Naive thymus-derived CD4-positive, alpha-beta T cell (primary cell): ENCODE measurements at regions of chrX and their contacts with region 1.

Region 1: DNA sequence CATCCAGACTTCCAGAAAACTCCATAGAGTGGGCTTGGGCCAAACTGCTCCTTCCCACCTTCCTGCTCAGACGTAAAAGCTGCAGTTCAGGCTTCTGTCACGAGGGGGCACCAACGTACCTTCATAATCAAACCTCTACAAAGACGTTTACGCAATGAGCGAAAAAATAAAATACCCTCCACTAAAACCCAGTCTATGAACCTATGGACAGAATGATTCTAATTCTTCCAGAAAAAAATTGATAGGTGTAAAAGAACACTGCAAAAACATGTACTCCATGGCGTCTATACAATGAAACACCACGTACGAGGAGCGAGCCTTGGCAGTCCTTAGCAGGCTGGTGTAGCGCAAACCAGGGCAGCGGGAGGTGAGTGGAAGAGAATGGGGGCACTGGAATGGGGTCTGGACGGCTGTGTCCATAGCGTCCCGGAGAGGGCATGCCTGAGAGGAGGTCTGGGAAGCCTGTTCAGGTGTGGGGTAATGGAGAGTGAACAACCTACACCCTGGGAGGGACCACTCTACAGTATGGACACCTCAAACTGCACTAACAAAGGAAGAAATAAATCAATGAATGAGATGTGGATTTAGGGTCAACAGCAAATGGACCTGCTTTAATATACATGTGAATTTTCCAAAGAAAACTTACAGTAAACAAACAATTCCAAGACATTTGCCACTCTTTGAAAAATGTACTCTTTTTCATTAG is 14.4 kb upstream of the RAB40A start:
- DNase-seq: peak; percentile 29 to 70 (median 53)
- ATAC-seq: peak; percentile 72
- H3K4me3 ChIP-seq: peak overlapping the region; percentile 46
- H3K4me3 Mint-ChIP-seq: peak overlapping the region; percentile 62 to 84 (median 74)
- H3K27ac ChIP-seq: no peak overlapping the region
- H3K27ac Mint-ChIP-seq: peak overlapping the region in 2 of 9 donors; percentile 38 to 73
- H3K4me1 ChIP-seq: no peaks in the 10 kb centered on the region
- H3K4me1 Mint-ChIP-seq: peaks cover 0 to 5% (median 3%) of the 10 kb centered on the region in 7 donors
- H3K27me3 ChIP-seq: no peaks in the 10 kb centered on the region
- H3K27me3 Mint-ChIP-seq: peaks cover 0 to 5% (median 0%) of the 10 kb centered on the region in 5 donors

Region 2: DNA sequence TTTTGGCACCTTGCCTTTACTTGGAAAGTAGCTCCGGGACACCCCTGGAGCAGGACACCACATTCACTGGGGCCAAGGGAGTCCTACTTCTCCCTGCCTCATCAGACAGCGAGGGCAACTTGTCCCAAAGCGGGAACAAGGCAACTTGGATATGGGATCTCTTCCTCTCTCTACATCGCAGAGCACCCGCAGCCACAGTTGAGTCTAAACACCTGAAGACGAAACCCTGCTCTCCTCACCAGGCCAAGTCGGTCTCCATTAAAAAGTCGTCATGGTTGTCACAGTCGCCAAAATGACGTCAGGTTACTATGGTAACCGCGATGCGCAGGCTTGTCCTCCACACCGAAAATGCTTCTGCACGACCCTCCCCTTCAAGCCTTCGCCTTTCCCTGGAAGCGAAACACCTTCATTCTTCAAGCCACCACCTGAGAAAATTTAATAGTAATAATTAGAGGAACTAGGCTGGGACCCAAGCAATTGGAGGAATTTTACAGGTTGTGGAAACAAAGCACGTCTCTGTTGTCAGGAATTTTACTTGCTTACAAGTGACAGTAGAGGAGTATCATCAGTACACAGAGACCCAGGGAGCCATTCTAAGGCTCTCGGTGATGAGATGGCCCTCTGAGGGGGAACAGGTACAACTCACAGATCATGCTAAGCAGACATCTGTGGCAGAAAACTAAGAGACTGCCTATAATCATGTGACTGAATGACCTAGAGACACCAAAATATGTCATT is 21.2 kb after region 1 on chrX:
- CTCF ChIA-PET with region 1: no interaction called
- POLR2A ChIA-PET with region 1: no interaction called
- intact Hi-C with region 1: no loop called
- DNase-seq: peak; percentile 23 to 75 (median 62)
- ATAC-seq: peak; percentile 79
- H3K4me3 ChIP-seq: peak overlapping the region; percentile 73
- H3K4me3 Mint-ChIP-seq: peak overlapping the region; percentile 85 to 92 (median 90)
- H3K27ac ChIP-seq: peak overlapping the region; percentile 53
- H3K27ac Mint-ChIP-seq: peak overlapping the region; percentile 79 to 97 (median 92)
- H3K4me1 ChIP-seq: no peaks in the 10 kb centered on the region
- H3K4me1 Mint-ChIP-seq: peaks cover 0 to 11% (median 6%) of the 10 kb centered on the region in 7 donors
- H3K27me3 ChIP-seq: no peaks in the 10 kb centered on the region
- H3K27me3 Mint-ChIP-seq: peaks cover 0 to 6% (median 0%) of the 10 kb centered on the region in 5 donors

Region 3: GRCh38 chrX:103629318-103630170 is 95.9 kb after region 1 on chrX:
- CTCF ChIA-PET with region 1: no interaction called
- POLR2A ChIA-PET with region 1: no interaction called
- intact Hi-C with region 1: loop called in 1 of 2 experiments (anchors 10 kb)
- DNase-seq: peak in 7 of 9 donors; percentile 3 to 25 (median 11)
- ATAC-seq: peak; percentile 60
- H3K4me3 ChIP-seq: peak overlapping the region; percentile 71
- H3K4me3 Mint-ChIP-seq: peak overlapping the region; percentile 80 to 93 (median 89)
- H3K27ac ChIP-seq: peak overlapping the region; percentile 75
- H3K27ac Mint-ChIP-seq: peak overlapping the region; percentile 17 to 91 (median 81)
- H3K4me1 ChIP-seq: no peaks in the 10 kb centered on the region
- H3K4me1 Mint-ChIP-seq: peaks cover 7 to 19% (median 14%) of the 10 kb centered on the region in 7 donors
- H3K27me3 ChIP-seq: no peaks in the 10 kb centered on the region
- H3K27me3 Mint-ChIP-seq: no peaks in the 10 kb centered on the region

Region 4: GRCh38 chrX:103640401-103641155 is 106.9 kb after region 1 on chrX:
- CTCF ChIA-PET with region 1: no interaction called
- POLR2A ChIA-PET with region 1: no interaction called
- intact Hi-C with region 1: no loop called
- DNase-seq: no peak
- ATAC-seq: no peak
- H3K4me3 ChIP-seq: no peak overlapping the region
- H3K4me3 Mint-ChIP-seq: no peak overlapping the region
- H3K27ac ChIP-seq: no peak overlapping the region
- H3K27ac Mint-ChIP-seq: no peak overlapping the region
- H3K4me1 ChIP-seq: no peaks in the 10 kb centered on the region
- H3K4me1 Mint-ChIP-seq: no peaks in the 10 kb centered on the region
- H3K27me3 ChIP-seq: no peaks in the 10 kb centered on the region
- H3K27me3 Mint-ChIP-seq: peaks cover 0 to 7% (median 0%) of the 10 kb centered on the region in 5 donors

Region 5: DNA sequence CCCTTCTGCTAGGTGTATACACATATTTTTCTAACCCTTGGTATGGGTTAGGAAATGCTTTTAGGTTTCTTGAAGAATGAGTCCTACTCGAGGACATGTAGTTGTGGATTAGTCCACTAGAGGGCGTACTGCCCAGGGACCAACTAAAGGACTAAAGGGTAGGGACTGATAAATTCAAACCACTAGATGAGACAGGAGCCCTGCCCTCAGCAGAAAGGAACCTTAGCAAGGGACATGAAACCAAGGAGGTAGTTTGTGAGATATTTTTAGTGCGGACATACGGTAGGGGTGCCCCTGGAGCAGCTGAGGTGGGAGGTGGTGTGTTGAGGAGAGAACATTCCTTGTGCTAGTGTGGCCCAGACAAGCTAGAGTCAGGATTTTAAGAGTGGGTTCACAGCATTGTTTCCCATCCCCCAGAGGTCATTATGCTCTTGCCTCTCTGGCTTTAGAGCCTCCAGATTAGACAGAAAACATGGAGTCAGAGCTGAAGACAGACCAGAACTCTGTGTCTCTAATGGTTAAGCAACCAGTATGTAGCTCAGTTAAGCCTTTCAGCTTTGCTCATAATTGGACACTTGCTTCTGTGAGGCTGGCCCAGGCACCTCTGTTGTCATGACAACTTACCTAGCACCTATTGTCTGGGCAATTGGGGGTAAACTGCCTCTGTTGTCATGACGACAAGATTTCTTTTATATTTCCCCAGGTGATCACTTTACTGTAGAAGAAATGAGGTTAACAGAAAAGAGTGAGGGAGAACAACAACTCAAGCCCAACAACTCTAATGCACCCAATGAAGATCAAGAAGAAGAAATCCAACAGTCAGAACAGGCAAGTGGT is 178.1 kb after region 1 on chrX:
- CTCF ChIA-PET with region 1: no interaction called
- POLR2A ChIA-PET with region 1: no interaction called
- intact Hi-C with region 1: loop called (anchors 1 kb)
- DNase-seq: peak in 7 of 9 donors; percentile 15 to 46 (median 40)
- ATAC-seq: peak; percentile 76
- H3K4me3 ChIP-seq: no peak overlapping the region
- H3K4me3 Mint-ChIP-seq: no peak overlapping the region
- H3K27ac ChIP-seq: no peak overlapping the region
- H3K27ac Mint-ChIP-seq: no peak overlapping the region
- H3K4me1 ChIP-seq: no peaks in the 10 kb centered on the region
- H3K4me1 Mint-ChIP-seq: peaks cover 0 to 3% (median 0%) of the 10 kb centered on the region in 7 donors
- H3K27me3 ChIP-seq: no peaks in the 10 kb centered on the region
- H3K27me3 Mint-ChIP-seq: peaks cover 0 to 3% (median 0%) of the 10 kb centered on the region in 5 donors

Region 6: GRCh38 chrX:103774070-103774642 is 240.5 kb after region 1 on chrX:
- CTCF ChIA-PET with region 1: no interaction called
- POLR2A ChIA-PET with region 1: no interaction called
- intact Hi-C with region 1: loop called in 1 of 2 experiments (anchors 1 kb)
- DNase-seq: no peak
- ATAC-seq: no peak
- H3K4me3 ChIP-seq: no peak overlapping the region
- H3K4me3 Mint-ChIP-seq: no peak overlapping the region
- H3K27ac ChIP-seq: no peak overlapping the region
- H3K27ac Mint-ChIP-seq: no peak overlapping the region
- H3K4me1 ChIP-seq: no peaks in the 10 kb centered on the region
- H3K4me1 Mint-ChIP-seq: no peaks in the 10 kb centered on the region
- H3K27me3 ChIP-seq: no peaks in the 10 kb centered on the region
- H3K27me3 Mint-ChIP-seq: peaks cover 0 to 4% (median 0%) of the 10 kb centered on the region in 5 donors

Region 7: DNA sequence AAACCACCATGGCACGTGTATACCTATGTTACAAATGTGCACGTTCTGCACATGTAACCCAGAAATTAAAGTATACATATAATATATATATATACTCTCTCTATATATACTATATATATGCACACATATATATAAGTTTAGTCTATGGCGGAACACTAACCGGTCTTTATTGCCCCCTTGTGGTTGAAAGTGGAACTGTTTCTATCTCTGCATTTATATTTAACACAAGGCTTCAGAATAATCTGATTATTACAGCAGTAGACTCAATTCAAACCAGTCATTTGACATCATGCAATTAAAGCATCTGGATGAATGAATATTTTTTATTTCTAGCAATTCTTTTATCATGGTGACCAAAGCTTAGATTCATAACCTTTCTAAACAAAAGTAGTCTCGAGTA is 283.8 kb after region 1 on chrX:
- CTCF ChIA-PET with region 1: interaction called, 5 read pairs
- POLR2A ChIA-PET with region 1: no interaction called
- intact Hi-C with region 1: loop called (anchors 1 kb)
- DNase-seq: peak in 7 of 9 donors; percentile 33 to 62 (median 51)
- ATAC-seq: peak; percentile 77
- H3K4me3 ChIP-seq: no peak overlapping the region
- H3K4me3 Mint-ChIP-seq: no peak overlapping the region
- H3K27ac ChIP-seq: no peak overlapping the region
- H3K27ac Mint-ChIP-seq: no peak overlapping the region
- H3K4me1 ChIP-seq: no peaks in the 10 kb centered on the region
- H3K4me1 Mint-ChIP-seq: no peaks in the 10 kb centered on the region
- H3K27me3 ChIP-seq: no peaks in the 10 kb centered on the region
- H3K27me3 Mint-ChIP-seq: peaks cover 0 to 26% (median 8%) of the 10 kb centered on the region in 5 donors

Region 8: DNA sequence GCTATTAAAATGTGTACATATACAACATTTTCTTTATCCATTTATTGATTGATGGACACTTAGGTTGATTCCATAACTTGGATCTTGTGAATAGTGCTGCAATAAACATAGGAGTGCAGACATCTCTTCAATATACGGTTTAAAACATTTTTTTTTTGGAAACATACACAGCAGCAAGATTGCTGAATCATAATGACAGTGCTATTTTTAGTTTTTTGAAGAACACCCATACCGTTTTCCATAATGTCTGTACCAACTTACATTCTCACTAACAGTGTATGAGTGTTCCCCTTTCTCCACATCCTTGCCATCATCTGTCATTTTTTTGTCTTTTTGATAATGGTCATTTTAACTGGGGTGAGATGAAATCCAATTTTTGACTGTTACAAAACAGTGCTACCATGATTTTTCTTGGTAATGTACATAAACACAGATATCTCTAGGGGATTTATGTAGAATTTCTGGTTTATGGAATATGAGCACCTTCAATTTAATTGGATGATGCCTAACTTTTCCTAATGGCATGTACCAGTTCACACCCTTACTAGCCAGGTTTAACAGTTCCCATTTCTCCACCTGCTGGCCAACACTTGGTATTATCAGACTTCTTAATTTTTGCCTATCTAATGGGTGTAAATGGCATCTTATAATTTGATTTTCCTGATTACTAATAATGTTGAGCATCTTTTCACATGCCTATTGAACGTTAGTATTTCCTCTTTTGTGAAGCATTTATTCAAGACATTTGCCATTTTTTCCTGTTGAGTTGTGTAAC is 407.7 kb after region 1 on chrX:
- CTCF ChIA-PET with region 1: no interaction called
- POLR2A ChIA-PET with region 1: no interaction called
- intact Hi-C with region 1: loop called in 1 of 2 experiments (anchors 1 kb)
- DNase-seq: peak in 3 of 9 donors; percentile 10 to 36 (median 18)
- ATAC-seq: no peak
- H3K4me3 ChIP-seq: no peak overlapping the region
- H3K4me3 Mint-ChIP-seq: no peak overlapping the region
- H3K27ac ChIP-seq: no peak overlapping the region
- H3K27ac Mint-ChIP-seq: no peak overlapping the region
- H3K4me1 ChIP-seq: no peaks in the 10 kb centered on the region
- H3K4me1 Mint-ChIP-seq: peaks cover 0 to 28% (median 5%) of the 10 kb centered on the region in 7 donors
- H3K27me3 ChIP-seq: no peaks in the 10 kb centered on the region
- H3K27me3 Mint-ChIP-seq: no peaks in the 10 kb centered on the region